Calu3 (cell line): ENCODE measurements at regions of chr21 and their contacts with region 1.

Region 1: DNA sequence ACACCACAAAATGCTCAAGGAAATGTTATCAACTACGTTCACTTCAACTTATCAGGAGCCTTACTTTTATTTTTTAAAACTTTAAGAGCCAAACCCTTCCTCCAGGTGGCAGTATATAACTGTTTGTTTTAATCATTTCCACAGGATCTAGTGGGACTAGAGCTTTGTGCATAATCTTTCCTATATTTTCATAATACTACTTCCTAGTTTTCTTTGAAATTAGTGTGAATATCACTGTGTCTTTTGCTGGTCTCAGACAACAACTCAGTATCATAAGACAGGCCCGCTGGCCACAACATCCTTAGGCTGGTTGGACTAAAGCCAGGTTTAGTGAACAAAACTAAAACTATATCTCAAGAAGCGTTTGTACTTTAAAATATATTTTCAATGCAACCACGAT is 145.5 kb downstream of the TIAM1 start:
- DNase-seq: peak; percentile 9
- H3K4me3 Mint-ChIP-seq: no peak overlapping the region
- H3K27ac Mint-ChIP-seq: no peak overlapping the region
- H3K4me1 Mint-ChIP-seq: no peaks in the 10 kb centered on the region
- H3K27me3 Mint-ChIP-seq: no peaks in the 10 kb centered on the region
- CTCF ChIP-seq: no peak

Region 2: DNA sequence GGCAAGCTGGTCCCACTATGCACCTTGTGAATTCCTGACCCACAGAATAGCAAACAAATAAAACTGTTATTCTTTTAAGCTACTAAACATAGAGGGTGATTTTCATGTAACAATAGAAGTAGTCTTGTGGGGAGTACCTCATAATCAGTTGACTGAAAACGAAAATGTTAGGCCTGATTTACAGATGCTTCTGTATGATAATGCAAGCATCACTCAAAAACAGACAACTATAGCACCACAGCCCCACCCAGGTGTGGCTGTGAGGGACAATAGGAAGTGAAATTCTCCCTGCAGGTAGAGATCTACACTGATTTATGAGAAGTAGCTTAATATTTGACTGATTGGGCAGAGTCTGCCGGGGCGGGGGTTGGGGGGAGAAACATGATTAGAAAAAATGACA is 133.8 kb before region 1 on chr21:
- CTCF ChIA-PET with region 1: no interaction called
- intact Hi-C with region 1: no loop called
- DNase-seq: no peak
- H3K4me3 Mint-ChIP-seq: no peak overlapping the region
- H3K27ac Mint-ChIP-seq: no peak overlapping the region
- H3K4me1 Mint-ChIP-seq: no peaks in the 10 kb centered on the region
- H3K27me3 Mint-ChIP-seq: no peaks in the 10 kb centered on the region
- CTCF ChIP-seq: no peak

Region 3: DNA sequence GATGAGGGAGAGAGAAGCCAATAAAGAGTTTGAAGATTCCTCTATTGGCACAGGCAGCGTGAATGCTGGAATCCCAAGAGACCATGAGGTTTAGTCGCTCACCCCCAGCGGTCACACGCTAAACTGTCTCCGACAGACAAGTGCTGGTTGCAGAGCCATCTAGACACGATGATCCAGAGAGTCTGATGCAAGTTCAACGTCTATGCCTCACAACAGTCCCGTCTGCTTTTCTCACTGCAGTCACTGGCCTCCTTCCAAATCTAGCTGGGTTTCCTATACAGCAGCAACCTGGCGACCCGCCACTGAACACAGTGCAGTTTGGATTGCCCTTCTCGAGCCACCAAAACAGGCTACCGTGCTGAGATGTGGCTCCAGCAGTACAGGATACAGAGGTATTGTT is 61.7 kb before region 1 on chr21:
- CTCF ChIA-PET with region 1: no interaction called
- intact Hi-C with region 1: no loop called
- DNase-seq: no peak
- H3K4me3 Mint-ChIP-seq: no peak overlapping the region
- H3K27ac Mint-ChIP-seq: no peak overlapping the region
- H3K4me1 Mint-ChIP-seq: no peaks in the 10 kb centered on the region
- H3K27me3 Mint-ChIP-seq: no peaks in the 10 kb centered on the region
- CTCF ChIP-seq: no peak

Region 4: DNA sequence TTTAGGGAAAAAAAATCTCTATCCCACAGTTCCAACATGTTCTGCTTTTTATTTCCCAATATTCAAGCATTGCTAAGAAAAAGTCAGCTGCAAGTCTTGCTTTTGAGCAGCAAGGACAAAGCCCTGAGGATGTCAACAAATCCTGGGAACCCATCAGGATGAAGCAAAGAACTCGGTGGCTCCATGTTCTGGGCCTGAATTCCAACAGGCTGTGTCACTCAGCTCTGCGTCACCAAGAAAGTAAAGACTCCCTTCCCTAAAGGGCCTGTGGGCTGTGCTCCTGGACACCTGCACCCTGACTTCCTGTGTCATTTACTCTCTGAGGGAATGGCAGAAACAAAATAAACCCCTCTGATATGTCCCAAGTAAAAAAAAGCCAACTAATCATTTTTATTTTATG is 50.0 kb after region 1 on chr21:
- CTCF ChIA-PET with region 1: no interaction called
- intact Hi-C with region 1: no loop called
- DNase-seq: no peak
- H3K4me3 Mint-ChIP-seq: no peak overlapping the region
- H3K27ac Mint-ChIP-seq: no peak overlapping the region
- H3K4me1 Mint-ChIP-seq: no peaks in the 10 kb centered on the region
- H3K27me3 Mint-ChIP-seq: no peaks in the 10 kb centered on the region
- CTCF ChIP-seq: no peak

Region 5: DNA sequence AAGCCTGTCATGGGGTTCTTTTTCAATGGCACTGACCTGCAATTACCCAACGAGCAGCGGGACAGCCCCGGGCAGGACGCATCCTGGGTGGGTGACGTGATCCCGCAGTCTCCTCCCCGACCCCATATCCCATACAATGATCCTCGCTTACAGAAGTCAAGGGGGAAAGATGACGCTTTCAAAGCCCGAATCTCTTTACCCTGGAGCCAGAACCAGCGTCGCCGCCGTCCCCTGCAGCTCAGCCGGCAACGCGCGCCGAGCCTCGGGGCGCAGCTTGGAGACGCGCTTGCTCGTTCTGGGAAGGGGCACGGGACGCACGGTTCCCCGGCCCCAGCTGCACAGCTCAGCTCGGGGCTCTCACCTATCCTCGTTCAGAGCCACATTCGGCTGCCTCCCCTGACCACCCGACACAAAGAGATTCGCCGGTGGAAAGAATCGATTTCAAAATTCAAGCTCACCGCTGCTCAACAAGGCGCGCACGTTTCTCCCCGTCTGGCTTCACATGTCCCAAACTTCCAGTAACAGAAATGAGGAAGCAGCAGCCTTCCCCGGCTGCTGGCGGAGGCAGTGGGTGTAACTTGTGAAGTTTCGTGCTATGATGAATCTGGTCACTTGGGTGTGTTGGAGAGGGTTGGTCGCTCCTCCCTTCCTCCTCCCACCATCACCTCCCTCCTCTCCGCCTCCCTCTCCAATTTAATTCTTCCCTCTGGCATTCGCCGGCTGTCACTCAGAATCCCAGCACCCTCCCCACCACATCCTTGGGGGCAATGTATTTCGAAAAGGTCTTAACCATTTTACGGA is 145.3 kb after region 1 on chr21 and contains the start of gene TIAM1:
- CTCF ChIA-PET with region 1: interaction called, 4 read pairs
- intact Hi-C with region 1: loop called (anchors 5 kb)
- DNase-seq: peak; percentile 31
- H3K4me3 Mint-ChIP-seq: peak within 1 kb of the TSS; percentile 98
- H3K27ac Mint-ChIP-seq: peak within 1 kb of the TSS; percentile 64
- H3K4me1 Mint-ChIP-seq: peaks cover 20% of the 10 kb centered on the region
- H3K27me3 Mint-ChIP-seq: no peaks in the 10 kb centered on the region
- CTCF ChIP-seq: no peak
- total RNA-seq, gene TIAM1: 15.2 and 18.2 TPM in 2 replicates

Region 6: DNA sequence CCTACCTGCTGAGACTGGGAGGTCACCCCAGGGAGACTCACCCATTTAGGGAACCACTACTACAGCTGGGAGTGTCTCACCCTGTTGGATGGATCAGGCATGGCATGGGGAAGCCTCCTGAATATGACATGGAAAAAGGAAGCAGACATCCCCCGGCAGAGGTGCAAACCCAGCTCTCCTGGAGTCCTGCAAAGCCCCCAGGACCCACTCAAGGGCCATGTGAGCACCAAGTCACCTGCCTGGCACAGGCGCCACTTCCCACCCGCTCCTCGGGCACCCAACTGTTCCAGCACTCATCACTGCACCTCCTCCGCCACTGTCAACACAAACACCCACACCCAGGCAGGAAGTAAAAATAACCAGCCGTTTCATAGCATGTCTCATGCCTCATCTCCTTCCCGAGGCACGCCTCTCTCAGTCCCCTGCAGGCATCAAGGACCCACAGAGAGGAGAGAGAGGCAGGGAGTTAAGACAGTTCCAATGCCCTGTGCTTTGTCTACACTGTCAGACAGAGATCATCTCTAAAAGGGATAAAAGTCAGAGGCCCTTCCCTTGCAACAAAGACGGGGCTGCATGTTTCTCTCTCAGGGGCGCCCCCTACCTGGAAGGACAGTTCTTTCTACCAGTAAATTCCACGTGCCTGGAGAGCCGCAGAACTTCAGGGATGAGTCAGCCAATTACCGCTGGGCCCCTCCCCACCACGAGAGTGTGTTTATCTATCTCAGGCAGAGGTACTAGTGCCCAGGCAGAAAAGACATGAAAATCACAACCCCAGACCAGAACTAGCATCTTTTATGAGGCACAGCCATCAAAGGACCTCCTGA is 310.8 kb after region 1 on chr21:
- CTCF ChIA-PET with region 1: no interaction called
- intact Hi-C with region 1: loop called (anchors 10 kb)
- DNase-seq: peak; percentile 66
- H3K4me3 Mint-ChIP-seq: no peak overlapping the region
- H3K27ac Mint-ChIP-seq: no peak overlapping the region
- H3K4me1 Mint-ChIP-seq: peaks cover 14% of the 10 kb centered on the region
- H3K27me3 Mint-ChIP-seq: no peaks in the 10 kb centered on the region
- CTCF ChIP-seq: peak; percentile 37

Region 7: GRCh38 chr21:31580866-31581276 is 382.3 kb after region 1 on chr21:
- CTCF ChIA-PET with region 1: interaction called, 13 read pairs
- intact Hi-C with region 1: loop called (anchors 1 kb)
- DNase-seq: peak; percentile 66
- H3K4me3 Mint-ChIP-seq: no peak overlapping the region
- H3K27ac Mint-ChIP-seq: no peak overlapping the region
- H3K4me1 Mint-ChIP-seq: no peaks in the 10 kb centered on the region
- H3K27me3 Mint-ChIP-seq: no peaks in the 10 kb centered on the region
- CTCF ChIP-seq: peak; percentile 48

Region 8: GRCh38 chr21:31604591-31605190 is 406.1 kb after region 1 on chr21:
- CTCF ChIA-PET with region 1: no interaction called
- intact Hi-C with region 1: loop called (anchors 1 kb)
- DNase-seq: peak; percentile 51
- H3K4me3 Mint-ChIP-seq: no peak overlapping the region
- H3K27ac Mint-ChIP-seq: no peak overlapping the region
- H3K4me1 Mint-ChIP-seq: no peaks in the 10 kb centered on the region
- H3K27me3 Mint-ChIP-seq: no peaks in the 10 kb centered on the region
- CTCF ChIP-seq: peak; percentile 65